ENCODE measurements at regions of chr16 and their contacts with region 1.

Region 1: DNA sequence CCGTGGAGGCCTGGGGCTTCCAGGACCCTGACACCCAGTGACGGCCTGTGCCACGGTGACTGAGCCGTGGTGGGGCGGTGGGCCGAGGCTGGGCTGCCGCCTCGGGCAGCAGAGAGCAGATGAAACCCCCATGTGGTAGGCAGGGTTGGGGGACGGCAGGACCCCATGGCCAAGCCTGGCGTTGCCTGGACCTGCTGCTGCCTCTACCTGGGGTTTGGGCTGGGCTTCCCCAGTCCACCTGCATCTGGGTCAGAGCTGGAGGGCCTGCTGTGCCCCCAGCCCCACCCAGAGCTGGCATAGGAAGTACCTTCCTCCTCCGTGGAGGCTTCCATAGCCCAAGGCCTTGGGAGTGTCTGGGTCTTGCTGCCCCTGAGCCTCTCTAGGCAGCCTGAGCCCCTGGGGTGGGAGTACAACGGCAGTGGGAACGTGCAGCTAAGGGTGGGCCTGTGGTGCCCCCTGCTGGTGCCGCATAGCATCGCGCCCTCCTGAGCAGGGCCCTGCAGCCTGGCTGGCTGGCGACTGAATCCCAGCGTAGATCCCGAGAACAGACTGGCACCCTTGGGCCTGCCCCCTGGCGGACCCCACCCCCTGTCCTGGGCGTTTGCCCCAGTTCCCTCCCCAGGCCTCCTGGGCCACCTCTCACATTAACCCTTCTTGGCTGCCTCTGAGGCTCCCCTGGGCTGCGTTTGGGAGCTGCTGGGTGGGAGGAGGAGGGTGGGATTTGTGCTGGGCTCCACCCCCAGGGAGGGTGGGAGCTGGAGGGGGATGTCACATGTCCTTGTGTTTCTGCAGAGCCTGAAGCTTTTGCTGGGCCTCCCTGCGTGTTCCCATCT is 12.6 kb upstream of the ATP6V0C start:
- DNase-seq: peak; percentile 95
- H3K4me3 ChIP-seq: peak overlapping the region; percentile 27 to 34; a peak in 2 of 4 replicates
- H3K27ac ChIP-seq: peak overlapping the region in 1 of 2 experiments; percentile 50; a peak in 1 of 4 replicates
- H3K4me1 ChIP-seq: peaks cover 0 to 27% of the 10 kb centered on the region in 2 experiments; a peak in 1 of 4 replicates
- H3K27me3 ChIP-seq: no peaks in the 10 kb centered on the region
- CTCF ChIP-seq: peak; percentile 96
- EP300 ChIP-seq: no peak
- RAD21 ChIP-seq: peak; percentile 96

Region 2: GRCh38 chr16:2194852-2195321 is 306.2 kb before region 1 on chr16:
- CTCF ChIA-PET with region 1: interaction called, 12 read pairs
- POLR2A ChIA-PET with region 1: no interaction called
- DNase-seq: peak; percentile 74
- H3K4me3 ChIP-seq: peak overlapping the region; percentile 21 to 53; a peak in 2 of 4 replicates
- H3K27ac ChIP-seq: no peak overlapping the region; a peak in 1 of 4 replicates
- H3K4me1 ChIP-seq: peaks cover 0 to 18% of the 10 kb centered on the region in 2 experiments; a peak in 1 of 4 replicates
- H3K27me3 ChIP-seq: no peaks in the 10 kb centered on the region
- CTCF ChIP-seq: peak; percentile 52
- EP300 ChIP-seq: no peak
- RAD21 ChIP-seq: peak; percentile 77

Region 3: GRCh38 chr16:2429034-2429770 is 71.9 kb before region 1 on chr16 and contains the start of gene CCNF:
- CTCF ChIA-PET with region 1: interaction called, 45 read pairs
- POLR2A ChIA-PET with region 1: interaction called, 7 read pairs
- DNase-seq: peak; percentile 100
- H3K4me3 ChIP-seq: peak within 1 kb of the TSS; percentile 89 to 94
- H3K27ac ChIP-seq: peak within 1 kb of the TSS; percentile 13 to 86; a peak in 3 of 4 replicates
- H3K4me1 ChIP-seq: peaks cover 10 to 31% of the 10 kb centered on the region in 2 experiments
- H3K27me3 ChIP-seq: no peaks in the 10 kb centered on the region
- CTCF ChIP-seq: peak; percentile 8; the same call in 1 of the 2 replicates
- EP300 ChIP-seq: no peak
- RAD21 ChIP-seq: no peak
- polyA plus RNA-seq, gene CCNF: 3.8 and 4.6 TPM in 2 replicates

Region 4: DNA sequence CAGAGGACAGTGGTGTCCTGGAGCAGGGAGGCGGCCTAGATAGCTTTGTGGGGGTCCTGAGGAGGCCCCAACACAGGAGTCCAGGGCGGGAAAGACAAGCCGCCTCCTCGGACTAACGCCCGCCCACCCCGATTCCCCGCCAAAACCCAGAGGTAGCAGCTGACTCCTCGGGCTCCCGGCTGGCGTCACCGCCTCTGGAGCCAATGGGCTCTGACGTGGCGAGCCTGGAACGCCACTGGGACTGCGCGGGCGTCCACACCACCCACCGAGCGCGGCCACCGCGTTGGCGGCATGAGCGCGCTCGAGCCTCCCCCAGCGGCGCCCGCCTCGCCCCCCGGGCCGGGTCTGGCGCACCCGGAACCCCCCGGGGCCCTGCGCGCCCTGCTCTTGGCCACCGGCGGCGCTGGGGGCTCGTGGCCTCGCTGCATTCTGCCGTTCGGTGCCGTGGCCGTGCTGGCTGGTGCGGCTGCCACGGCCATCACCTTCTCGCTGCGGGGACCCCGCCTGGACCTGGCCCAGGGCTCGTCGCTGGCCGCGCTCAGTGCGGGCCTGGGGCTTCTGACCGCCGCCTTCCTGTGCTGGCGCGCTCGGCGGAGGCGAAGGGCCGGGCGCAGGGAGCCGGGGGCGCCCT is 33.5 kb before region 1 on chr16:
- CTCF ChIA-PET with region 1: interaction called, 32 read pairs
- POLR2A ChIA-PET with region 1: interaction called, 19 read pairs
- DNase-seq: peak; percentile 89
- H3K4me3 ChIP-seq: peak overlapping the region; percentile 51 to 57
- H3K27ac ChIP-seq: peak overlapping the region in 1 of 2 experiments; percentile 97; a peak in 2 of 4 replicates
- H3K4me1 ChIP-seq: peaks cover 6 to 55% of the 10 kb centered on the region in 2 experiments; a peak in 3 of 4 replicates
- H3K27me3 ChIP-seq: no peaks in the 10 kb centered on the region
- CTCF ChIP-seq: no peak; the same call in 1 of the 2 replicates
- EP300 ChIP-seq: no peak
- RAD21 ChIP-seq: 0 out of 2 replicates have a peak, but pooled peaks have one; percentile 8

Region 5: DNA sequence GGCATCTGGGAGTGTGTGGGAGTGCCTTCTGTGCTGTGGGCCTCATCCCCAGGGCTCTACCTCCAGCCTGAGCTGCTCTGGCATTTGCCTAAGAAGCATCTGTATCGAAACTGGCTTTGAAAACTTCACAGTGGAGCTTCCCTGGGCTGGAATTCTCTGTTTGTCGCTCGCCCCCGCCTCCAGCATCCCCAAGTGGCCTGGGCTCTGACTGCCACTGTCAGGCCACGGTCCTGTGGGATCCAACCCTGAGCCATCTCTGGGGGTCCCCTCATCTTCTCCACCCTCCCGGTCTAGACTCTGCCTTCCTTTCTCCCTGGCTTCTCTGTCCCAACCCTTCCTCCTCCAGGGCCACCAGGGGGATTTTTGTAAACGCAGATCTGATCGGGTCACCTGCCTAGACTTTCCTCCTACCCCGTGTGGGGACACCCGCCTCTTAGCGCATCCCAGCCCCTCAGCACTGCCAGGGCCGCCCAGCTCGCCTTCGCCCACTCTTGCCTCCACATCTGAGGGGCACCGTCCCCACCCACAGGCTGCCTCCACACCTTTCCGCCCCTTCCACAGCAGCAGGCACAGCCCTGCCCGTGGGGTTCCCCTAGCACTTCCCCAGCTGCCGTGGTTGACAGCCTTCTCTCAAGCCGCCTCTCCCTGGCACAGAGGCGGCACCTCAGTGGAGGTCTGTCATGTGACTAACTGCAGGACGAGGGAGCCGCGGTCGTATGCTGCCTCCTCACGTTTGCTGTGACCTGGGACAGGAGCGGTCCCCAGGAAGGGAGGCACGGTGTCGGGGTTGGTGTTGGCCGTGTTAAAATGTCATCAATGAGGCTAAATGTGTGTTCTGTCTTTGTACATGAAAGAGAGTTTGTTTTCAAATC is 14.3 kb before region 1 on chr16:
- CTCF ChIA-PET with region 1: interaction called, 95 read pairs
- POLR2A ChIA-PET with region 1: interaction called, 4 read pairs
- DNase-seq: no peak
- H3K4me3 ChIP-seq: no peak overlapping the region
- H3K27ac ChIP-seq: no peak overlapping the region
- H3K4me1 ChIP-seq: peaks cover 3 to 41% of the 10 kb centered on the region in 2 experiments; a peak in 3 of 4 replicates
- H3K27me3 ChIP-seq: no peaks in the 10 kb centered on the region
- CTCF ChIP-seq: no peak
- EP300 ChIP-seq: no peak
- RAD21 ChIP-seq: no peak

Region 6: GRCh38 chr16:2811703-2812471 is 310.8 kb after region 1 on chr16:
- CTCF ChIA-PET with region 1: no interaction called
- POLR2A ChIA-PET with region 1: no interaction called
- DNase-seq: no peak
- H3K4me3 ChIP-seq: no peak overlapping the region
- H3K27ac ChIP-seq: no peak overlapping the region
- H3K4me1 ChIP-seq: peaks cover 0 to 3% of the 10 kb centered on the region in 2 experiments; a peak in 1 of 4 replicates
- H3K27me3 ChIP-seq: no peaks in the 10 kb centered on the region; the same call in 1 of the 2 replicates
- CTCF ChIP-seq: no peak
- EP300 ChIP-seq: no peak
- RAD21 ChIP-seq: no peak